Head of caudate nucleus (tissue), 42 donors: ENCODE measurements at regions of chr16 and their contacts with region 1.

Region 1: GRCh38 chr16:68843482-68844210 is at the start of gene TANGO6:
- DNase-seq: peak; percentile 73 to 95 (median 89)

Region 2: GRCh38 chr16:68538880-68539701 is 304.6 kb before region 1 on chr16 and contains the start of gene ZFP90:
- intact Hi-C with region 1: loop called (anchors 10 kb)
- DNase-seq: peak; percentile 61 to 95 (median 88)

Region 3: GRCh38 chr16:68811503-68811902 is 32.1 kb before region 1 on chr16:
- intact Hi-C with region 1: no loop called
- DNase-seq: no peak

Region 4: GRCh38 chr16:69123910-69124309 is 280.3 kb after region 1 on chr16:
- intact Hi-C with region 1: loop called (anchors 5 kb)
- DNase-seq: peak in 33 of 42 donors; percentile 22 to 85 (median 55)